ENCODE measurements at regions of chr2 and their contacts with region 1.

Region 1: DNA sequence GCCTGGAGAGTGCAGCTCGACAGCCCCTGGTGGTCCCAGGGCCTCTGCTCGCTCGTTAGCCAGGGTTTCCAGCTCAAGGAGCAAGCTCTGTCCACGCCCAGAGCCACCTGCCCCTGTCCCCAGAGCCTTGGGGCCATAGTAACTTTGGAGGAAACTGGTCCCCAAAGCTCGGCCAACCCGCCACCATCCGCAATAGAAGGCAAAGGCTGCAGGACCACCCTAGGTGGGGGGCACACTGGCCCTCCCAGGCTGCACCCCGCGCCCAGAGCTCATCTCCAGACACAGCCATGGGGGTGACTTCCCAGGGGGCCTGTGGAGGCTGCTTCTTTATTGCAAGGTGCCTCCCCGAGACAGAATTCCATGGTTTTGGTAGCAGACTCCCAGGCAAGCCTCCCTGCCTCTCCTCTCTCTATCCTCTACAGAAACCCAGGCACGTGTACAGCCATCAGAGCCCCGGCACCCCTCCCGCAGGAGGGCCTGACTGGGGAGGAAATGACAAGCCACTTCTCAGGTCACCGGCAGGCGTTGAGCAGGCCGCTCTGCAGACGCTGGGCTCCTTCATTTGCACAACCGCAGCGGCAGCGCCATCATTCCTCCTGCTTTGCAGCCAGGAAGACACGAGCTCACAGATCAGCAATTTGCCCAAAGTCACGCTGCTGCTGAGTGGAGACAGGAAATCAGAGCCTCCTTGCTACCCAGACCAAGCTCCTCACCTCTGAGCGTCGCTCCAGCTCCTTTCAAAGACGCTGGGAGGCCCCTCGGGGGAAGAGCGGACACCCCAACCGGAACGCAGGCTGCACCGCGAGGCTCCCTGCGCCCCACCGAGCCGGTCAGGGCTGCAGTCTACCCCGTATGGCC is 80.2 kb downstream of the NDUFA10 start:
- DNase-seq: peak; percentile 63
- ATAC-seq: peak; percentile 88
- H3K4me3 Mint-ChIP-seq: peak overlapping the region; percentile 71
- H3K27ac Mint-ChIP-seq: peak overlapping the region; percentile 93
- H3K4me1 Mint-ChIP-seq: peaks cover 5% of the 10 kb centered on the region
- H3K27me3 Mint-ChIP-seq: no peaks in the 10 kb centered on the region

Region 2: DNA sequence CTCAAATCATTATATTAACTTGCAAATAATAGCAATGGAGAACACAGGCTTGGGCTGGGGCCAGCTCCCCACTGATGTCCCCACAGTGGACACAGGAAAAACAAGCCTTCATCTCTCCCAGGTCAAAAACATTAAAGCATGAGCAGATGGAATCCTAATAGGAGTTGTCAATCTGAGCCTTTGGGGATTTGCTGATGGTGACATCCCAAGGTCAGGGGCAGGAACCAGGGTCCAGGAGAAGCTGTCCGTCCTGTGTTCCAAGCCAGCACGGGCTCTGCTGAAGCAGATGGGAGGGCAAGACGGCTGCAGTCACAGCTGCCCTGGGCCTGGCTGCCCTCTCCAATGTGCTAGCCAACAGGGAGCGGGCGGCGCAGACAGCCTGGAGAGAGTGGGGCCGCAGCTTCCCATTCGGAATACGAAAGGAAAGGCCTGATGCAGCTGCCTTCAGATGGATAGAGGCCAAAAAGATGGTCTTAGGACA is 55.2 kb before region 1 on chr2:
- POLR2A ChIA-PET with region 1: no interaction called
- DNase-seq: no peak
- ATAC-seq: no peak
- H3K4me3 Mint-ChIP-seq: no peak overlapping the region
- H3K27ac Mint-ChIP-seq: no peak overlapping the region
- H3K4me1 Mint-ChIP-seq: no peaks in the 10 kb centered on the region
- H3K27me3 Mint-ChIP-seq: peaks cover 14% of the 10 kb centered on the region

Region 3: DNA sequence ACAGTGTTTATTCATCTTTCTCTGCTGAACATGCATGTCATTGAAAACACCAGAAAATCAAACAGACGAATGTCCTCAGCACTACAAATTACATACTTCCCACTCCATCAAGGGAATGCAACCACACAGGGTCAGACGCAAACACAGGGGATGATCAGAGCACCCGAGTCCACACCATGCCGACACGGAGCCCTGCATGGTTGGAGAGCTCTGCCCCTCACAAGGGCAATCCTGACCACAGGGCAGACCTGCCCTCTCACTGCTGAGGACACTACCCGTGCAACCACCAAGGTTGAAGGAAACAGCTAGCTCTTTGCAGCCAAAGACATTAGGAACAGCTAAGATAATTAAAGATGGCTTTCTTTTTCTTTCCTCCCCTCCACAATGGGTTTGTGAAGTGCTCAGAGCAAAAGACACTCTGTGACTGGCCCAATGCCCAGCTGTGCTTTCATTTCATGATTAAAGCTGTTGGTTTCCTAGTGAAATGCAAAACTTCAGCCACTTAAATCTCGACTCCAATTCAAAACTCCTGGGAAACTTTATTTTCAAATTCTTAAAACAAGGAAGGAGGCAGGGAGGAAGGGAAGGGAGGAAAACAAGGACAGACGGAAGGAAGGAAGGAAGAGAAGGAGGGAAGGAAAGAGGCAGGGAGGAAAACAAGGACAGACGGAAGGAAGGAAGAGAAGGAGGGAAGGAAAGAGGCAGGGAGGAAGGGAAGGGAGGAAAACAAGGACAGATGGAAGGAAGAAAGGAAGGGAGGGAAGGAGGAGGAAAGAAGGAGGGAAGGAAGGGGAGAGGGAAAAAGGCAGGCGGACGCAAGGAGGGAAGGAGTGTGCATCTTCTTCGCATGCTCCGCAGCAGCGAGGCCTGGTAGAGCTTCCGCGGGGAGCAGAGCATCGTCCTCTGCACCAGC is 14.4 kb after region 1 on chr2:
- POLR2A ChIA-PET with region 1: no interaction called
- DNase-seq: no peak
- ATAC-seq: no peak
- H3K4me3 Mint-ChIP-seq: no peak overlapping the region
- H3K27ac Mint-ChIP-seq: no peak overlapping the region
- H3K4me1 Mint-ChIP-seq: peaks cover 4% of the 10 kb centered on the region
- H3K27me3 Mint-ChIP-seq: no peaks in the 10 kb centered on the region

Region 4: DNA sequence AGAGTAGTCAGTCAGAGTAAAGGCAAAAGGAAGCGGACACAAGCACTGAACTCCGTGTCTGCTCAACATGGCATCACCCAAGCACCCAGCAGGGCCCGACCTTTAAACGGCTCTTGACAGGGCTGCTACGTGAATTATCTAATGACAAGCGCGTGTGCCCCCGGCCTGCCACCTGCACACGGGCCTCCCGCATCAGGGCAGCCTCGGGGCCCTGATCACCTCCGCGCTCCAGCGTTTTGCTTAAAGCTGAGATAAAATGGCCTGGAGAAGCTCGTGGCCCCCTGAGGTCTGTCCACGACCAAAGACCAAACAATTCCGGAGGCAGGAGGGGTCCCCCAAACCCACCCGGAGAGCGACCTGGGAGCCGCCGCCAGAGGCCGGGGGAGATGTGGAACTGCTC is 79.8 kb after region 1 on chr2:
- POLR2A ChIA-PET with region 1: interaction called, 13 read pairs
- DNase-seq: no peak
- ATAC-seq: peak; percentile 47
- H3K4me3 Mint-ChIP-seq: peak overlapping the region; percentile 93
- H3K27ac Mint-ChIP-seq: peak overlapping the region; percentile 96
- H3K4me1 Mint-ChIP-seq: peaks cover 15% of the 10 kb centered on the region
- H3K27me3 Mint-ChIP-seq: peaks cover 7% of the 10 kb centered on the region